ENCODE measurements at regions of chr5 and their contacts with region 1.

Region 1: DNA sequence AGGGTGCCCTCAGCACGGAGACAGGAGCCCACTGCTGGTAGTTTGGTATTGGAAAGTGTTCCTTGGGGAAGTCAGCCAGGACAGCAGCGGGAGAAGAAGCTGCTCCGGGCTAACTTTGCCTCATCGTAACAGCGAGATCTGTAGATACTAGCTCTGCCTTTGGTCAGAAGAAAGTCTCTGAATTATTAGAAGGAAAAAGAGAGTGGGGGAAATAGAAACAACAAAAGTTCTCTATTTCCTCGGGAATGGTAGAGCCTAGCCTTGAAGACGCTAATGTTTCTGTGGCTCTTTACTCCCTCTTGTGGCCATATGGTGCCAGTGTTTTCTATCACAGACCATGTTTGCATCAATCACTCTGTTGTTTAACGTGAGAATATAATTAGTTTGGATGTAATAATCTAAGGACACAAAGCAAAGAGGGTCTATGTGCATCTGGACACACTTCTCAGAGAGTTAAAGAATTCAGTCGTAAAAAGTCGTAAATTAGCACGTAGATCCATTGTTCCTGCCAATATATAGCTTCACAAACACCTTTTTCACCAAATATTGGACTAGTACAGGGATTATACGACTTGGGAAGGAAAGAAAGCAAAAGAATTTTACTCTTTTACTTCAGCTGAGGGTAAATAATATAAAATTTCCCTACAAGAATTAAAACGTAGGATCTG is 40.2 kb upstream of the HSD17B4 start:
- DNase-seq: peak; percentile 42 to 53
- ATAC-seq: peak; percentile 95

Region 2: DNA sequence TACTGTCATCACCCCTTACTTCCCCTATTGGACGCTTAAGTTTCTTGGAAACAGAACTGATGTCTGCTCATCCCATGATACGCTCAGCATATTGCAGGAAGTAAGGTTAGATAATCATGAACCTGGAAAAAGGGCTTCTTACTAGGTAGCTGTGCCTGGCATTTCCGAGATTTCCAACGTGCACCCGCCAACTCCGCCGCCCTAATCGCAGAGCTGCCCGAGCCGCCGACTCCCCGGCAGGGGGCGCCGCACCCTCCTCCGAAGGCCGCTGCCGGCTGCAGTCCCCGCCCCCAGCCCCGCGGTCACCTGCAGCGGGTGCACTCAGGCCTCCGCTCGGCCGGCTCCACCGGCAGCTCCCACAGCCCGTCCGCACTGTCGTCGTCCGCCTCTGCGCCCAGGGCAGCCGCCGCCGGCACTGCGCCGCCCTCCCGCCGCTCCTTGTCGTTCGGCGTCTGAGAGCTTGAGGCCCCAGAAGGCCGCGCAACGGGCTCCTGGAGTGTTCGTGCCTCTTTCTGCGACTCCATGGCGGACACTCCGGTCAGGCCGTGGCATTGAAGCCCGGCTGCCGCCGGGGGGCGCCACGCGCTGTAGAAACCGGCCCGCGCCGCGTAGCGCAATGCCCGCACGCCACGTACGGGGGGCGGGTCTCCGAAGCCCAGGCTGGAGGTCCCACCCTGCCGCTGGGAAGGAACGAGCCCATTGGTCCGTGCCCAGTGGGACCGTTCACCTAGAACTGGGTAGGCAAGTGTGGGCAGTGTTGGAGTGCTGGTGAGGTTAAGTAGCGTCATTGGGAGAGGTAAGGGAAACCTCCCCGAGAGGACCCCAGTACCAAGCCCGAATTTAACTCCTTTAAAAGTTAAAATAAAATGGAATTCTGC is 423.8 kb before region 1 on chr5 and contains the start of gene DTWD2:
- intact Hi-C with region 1: loop called in 1 of 2 experiments (anchors 5 kb)
- DNase-seq: peak; percentile 95
- ATAC-seq: peak; percentile 94
- total RNA-seq, gene DTWD2: 11.9 to 12.4 TPM

Region 3: GRCh38 chr5:119267958-119268386 is 144.1 kb before region 1 on chr5:
- intact Hi-C with region 1: loop called in 1 of 2 experiments (anchors 10 kb)
- DNase-seq: peak; percentile 94 to 95
- ATAC-seq: peak; percentile 78

Region 4: GRCh38 chr5:119614838-119615237 is 202.8 kb after region 1 on chr5:
- intact Hi-C with region 1: no loop called
- DNase-seq: no peak
- ATAC-seq: no peak

Measured in left colon (tissue), 2 donors.